ENCODE measurements at regions of chr5 and their contacts with region 1.

Region 1: DNA sequence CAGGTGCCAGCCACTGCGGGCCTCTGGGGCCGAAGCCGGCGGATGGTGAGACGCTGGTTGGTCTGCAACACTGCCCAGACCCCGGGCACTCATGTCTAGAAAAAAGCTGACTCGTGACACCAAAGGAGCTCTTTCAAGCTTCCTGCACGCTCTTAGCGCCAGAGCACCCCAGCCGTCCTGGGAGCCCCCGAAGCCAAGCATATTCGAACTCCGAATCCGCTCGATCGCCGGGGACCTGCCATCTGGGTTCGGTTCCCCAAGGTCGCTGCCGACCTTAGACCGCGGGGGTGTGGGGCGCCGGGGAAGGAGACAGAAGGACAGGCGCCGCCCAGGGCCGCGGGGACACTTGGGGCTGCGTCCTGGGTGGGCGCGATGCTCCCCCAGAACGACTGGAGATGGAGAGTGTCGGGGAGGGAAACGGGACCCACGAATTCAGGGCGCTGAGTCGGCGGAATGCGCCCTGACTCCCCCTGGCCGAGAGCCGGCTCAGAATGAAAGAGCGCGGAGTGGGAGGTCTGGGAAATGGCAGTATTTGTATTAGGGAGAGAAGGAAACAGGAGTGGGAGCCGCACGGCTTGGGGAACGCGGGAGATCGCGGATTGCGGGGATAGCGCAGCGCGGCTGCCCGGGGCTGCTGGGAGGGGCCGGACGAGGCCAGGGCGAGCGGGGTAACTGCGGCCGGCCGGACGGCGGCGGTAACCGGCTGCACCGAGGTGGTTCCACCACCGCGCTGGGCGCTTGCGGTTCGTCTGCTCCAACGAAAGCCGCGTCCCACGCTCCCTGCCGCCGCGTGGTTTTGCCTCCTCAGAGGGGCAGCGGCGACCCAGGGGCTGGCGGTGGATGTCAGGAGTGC is 20.1 kb upstream of the MARCHF6 start:
- DNase-seq: peak; percentile 49
- ATAC-seq: peak; percentile 49
- H3K4me3 ChIP-seq: peak overlapping the region in 4 of 5 experiments; percentile 33 to 58 (median 58)
- H3K4me3 Mint-ChIP-seq: peak overlapping the region; percentile 93
- H3K27ac ChIP-seq: peak overlapping the region in 1 of 2 donors; percentile 23
- H3K27ac Mint-ChIP-seq: no peak overlapping the region
- H3K4me1 ChIP-seq: peaks cover 10 to 15% of the 10 kb centered on the region in 2 donors
- H3K4me1 Mint-ChIP-seq: peaks cover 16% of the 10 kb centered on the region
- H3K27me3 ChIP-seq: peaks cover 0 to 44% (median 20%) of the 10 kb centered on the region in 4 experiments
- H3K27me3 Mint-ChIP-seq: peaks cover 49% of the 10 kb centered on the region
- CTCF ChIP-seq: no peak

Region 2: DNA sequence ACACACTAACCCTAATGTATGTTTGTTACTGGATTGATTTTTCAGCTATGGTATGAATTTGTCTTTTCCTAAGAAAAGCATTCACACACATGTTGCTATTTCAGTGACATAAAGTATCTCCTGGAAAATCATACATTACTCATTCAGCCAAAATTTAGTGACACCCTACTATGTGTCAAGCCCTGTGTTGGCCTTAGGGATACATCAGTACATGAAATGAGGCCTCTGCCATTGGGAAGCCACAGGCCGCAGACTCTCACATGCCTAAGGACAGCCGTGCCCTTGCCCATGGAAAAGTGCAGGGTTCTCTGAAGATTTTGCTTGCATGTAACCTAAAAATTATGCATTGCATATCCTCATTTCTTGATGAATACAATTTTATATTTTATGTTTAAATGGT is 14.9 kb after region 1 on chr5:
- CTCF ChIA-PET with region 1: no interaction called
- POLR2A ChIA-PET with region 1: no interaction called
- intact Hi-C with region 1: loop called (anchors 2 kb)
- DNase-seq: no peak
- ATAC-seq: no peak
- H3K4me3 ChIP-seq: no peak overlapping the region
- H3K4me3 Mint-ChIP-seq: no peak overlapping the region
- H3K27ac ChIP-seq: no peak overlapping the region
- H3K27ac Mint-ChIP-seq: no peak overlapping the region
- H3K4me1 ChIP-seq: peaks cover 9 to 13% of the 10 kb centered on the region in 2 donors
- H3K4me1 Mint-ChIP-seq: peaks cover 13% of the 10 kb centered on the region
- H3K27me3 ChIP-seq: no peaks in the 10 kb centered on the region
- H3K27me3 Mint-ChIP-seq: no peaks in the 10 kb centered on the region
- CTCF ChIP-seq: no peak

Region 3: DNA sequence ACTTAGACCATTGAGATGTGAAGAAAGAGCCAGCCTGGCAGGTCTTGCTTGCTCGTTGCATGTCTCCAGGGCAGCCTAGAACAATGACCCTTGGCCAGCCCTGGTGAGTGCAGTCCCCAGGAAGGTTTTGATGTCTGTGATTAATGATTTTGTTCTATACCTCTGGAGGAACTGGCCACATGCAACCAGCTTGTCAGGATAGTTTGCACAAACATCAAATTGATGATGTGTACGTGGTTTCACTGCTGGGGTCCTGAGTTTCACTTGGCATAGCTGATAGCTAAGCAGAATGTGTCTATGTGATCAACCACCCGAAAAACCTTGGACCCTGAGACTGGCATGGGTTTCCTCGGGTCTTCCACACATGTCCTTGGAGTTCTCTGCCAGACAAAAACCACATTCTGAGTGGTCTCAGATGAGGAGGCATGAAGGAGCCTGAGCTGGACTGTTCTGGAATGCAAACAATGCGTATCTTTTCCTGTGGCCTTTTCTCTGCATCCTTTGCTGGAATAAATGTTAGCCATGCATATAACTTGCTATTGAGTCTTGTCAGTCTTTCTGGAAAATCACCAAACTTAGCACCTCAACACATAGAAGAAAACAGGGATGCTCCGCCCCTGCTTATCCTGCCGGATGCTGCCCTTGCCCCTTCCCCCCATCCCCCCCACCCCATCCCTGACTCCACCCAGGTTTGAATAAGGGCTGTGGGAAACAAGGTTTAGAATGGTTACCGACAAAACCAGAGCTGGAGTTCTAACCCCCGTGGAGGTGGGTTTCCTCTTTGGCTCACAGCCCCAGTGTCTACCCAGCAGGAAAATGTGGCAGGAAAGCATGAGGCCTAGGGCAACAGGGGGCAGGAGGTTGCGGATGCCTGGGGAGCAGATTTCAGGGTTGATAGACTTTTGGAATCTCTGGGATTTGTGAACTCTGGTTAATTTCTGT is 180.4 kb after region 1 on chr5:
- CTCF ChIA-PET with region 1: no interaction called
- POLR2A ChIA-PET with region 1: no interaction called
- intact Hi-C with region 1: no loop called
- DNase-seq: no peak
- ATAC-seq: no peak
- H3K4me3 ChIP-seq: no peak overlapping the region
- H3K4me3 Mint-ChIP-seq: no peak overlapping the region
- H3K27ac ChIP-seq: no peak overlapping the region
- H3K27ac Mint-ChIP-seq: no peak overlapping the region
- H3K4me1 ChIP-seq: no peaks in the 10 kb centered on the region
- H3K4me1 Mint-ChIP-seq: no peaks in the 10 kb centered on the region
- H3K27me3 ChIP-seq: no peaks in the 10 kb centered on the region
- H3K27me3 Mint-ChIP-seq: peaks cover 5% of the 10 kb centered on the region
- CTCF ChIP-seq: no peak

Measured in B cell (primary cell).